ENCODE measurements at regions of chr15 and their contacts with region 1.

Region 1: DNA sequence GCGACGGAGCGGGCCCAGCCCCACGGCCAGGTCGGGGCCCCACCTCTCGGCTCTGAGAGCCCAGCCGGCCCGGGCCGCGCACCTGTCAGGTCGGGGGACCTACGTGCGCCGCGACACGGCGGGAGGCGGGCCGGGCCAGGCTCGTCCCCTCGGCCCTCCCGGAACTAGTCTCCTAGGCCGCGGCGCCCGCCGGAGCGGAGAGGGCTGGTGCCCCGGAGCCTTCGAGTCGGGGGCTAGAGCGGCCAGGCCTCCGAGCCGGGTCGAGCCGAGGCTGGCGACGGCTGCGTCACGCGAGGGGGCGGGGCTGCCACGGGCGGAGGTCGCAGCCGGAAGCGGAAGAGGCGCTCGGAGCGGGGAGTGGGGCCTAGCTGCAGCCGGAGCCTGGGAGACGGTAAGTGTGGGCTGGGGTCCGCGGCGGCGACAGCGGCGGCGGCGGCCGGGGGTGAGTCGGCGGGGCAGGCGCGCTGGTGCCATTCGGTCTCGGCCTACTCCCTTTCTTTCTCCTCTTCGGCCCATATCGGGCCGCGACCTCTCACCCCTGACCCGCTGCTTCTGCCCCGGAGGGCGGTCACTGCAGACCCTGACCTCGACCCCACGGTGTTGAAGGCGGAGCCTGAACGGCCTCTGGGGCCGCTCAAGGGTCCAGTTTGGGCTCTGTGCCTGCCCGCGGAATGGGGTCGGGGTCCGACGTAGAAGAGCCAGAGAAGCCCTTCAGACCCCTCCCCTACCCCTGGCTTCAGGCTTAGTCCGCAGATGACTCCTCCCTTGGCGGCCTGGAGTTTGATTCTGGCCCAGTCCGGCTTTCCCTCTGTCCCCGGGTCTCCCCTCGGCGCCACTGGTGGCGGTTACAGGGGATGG is at the start of gene CLK3:
- DNase-seq: peak; percentile 94 to 96
- H3K4me3 ChIP-seq: peak within 1 kb of the TSS; percentile 71 to 86
- H3K27ac ChIP-seq: peak within 1 kb of the TSS; percentile 82 to 94
- H3K4me1 ChIP-seq: peaks cover 0 to 7% of the 10 kb centered on the region in 2 donors
- H3K27me3 ChIP-seq: no peaks in the 10 kb centered on the region
- CTCF ChIP-seq: no peak
- POLR2A ChIP-seq: peak; percentile 74 to 85
- total RNA-seq, gene CLK3: 33.0 to 90.4 (median 84.2) TPM

Region 2: DNA sequence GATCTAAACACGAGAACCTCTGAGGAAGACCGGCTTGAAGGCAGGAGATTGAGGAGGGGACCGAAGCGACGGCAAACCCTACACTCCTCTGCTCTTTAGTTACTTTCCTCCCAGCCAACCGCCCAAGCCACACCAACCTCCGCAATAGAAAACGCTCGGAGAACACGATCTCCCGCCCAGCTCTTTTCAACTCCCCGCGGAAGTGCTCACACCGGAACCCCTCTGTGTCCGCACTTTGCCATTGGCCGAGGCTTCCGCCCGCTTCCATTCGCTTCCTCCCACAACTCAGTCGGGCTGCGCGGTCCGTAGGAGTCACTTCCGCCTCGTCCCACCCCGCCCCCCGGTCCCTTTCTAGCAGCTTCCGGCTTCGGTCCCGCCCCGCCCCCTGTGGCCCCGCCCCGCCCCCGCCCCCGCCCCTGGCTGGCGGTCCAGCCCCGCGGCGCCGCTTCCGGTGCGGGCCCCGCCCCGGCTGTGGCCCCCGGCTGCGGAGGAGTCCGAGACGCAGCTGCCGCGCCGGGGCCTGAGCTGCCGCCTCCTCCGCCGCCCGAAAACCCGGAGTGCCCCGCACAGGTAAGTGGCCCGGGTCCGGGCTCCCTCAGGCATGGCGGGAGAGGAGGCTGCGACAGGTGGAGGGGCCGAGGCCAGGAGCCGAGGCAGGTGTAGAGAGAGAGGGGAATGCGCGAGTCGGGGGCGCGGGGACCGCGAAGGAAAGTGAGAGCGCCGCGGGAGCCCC is 74.8 kb before region 1 on chr15 and contains the start of gene ARID3B:
- intact Hi-C with region 1: loop called (anchors 5 kb)
- DNase-seq: peak; percentile 96 to 98
- H3K4me3 ChIP-seq: peak within 1 kb of the TSS; percentile 77 to 99
- H3K27ac ChIP-seq: peak within 1 kb of the TSS; percentile 78 to 90
- H3K4me1 ChIP-seq: peaks cover 8 to 9% of the 10 kb centered on the region in 2 donors
- H3K27me3 ChIP-seq: no peaks in the 10 kb centered on the region
- CTCF ChIP-seq: no peak
- POLR2A ChIP-seq: peak in 1 of 2 donors; percentile 34
- total RNA-seq, gene ARID3B: 1.5 to 8.8 (median 3.7) TPM